Activated CD4-positive, alpha-beta memory T cell treated with anti-CD3 and anti-CD28 coated beads for 36 hours (primary cell): ENCODE measurements at regions of chr1 and their contacts with region 1.

Region 1: GRCh38 chr1:201511941-201512539 is 5.1 kb upstream of the CSRP1 start:
- DNase-seq: no peak
- H3K4me3 Mint-ChIP-seq: no peak overlapping the region
- H3K27ac Mint-ChIP-seq: no peak overlapping the region
- H3K4me1 Mint-ChIP-seq: peaks cover 9% of the 10 kb centered on the region
- H3K27me3 Mint-ChIP-seq: no peaks in the 10 kb centered on the region

Region 2: GRCh38 chr1:201447911-201448871 is 63.8 kb before region 1 on chr1:
- CTCF ChIA-PET with region 1: interaction called, 150 read pairs
- POLR2A ChIA-PET with region 1: interaction called, 3 read pairs
- intact Hi-C with region 1: loop called (anchors 1 kb)
- DNase-seq: peak; percentile 82
- H3K4me3 Mint-ChIP-seq: no peak overlapping the region
- H3K27ac Mint-ChIP-seq: no peak overlapping the region
- H3K4me1 Mint-ChIP-seq: peaks cover 2% of the 10 kb centered on the region
- H3K27me3 Mint-ChIP-seq: peaks cover 15% of the 10 kb centered on the region

Region 3: GRCh38 chr1:201468844-201469511 is 43.1 kb before region 1 on chr1 and contains the start of gene PHLDA3:
- CTCF ChIA-PET with region 1: interaction called, 12 read pairs
- POLR2A ChIA-PET with region 1: interaction called, 3 read pairs
- intact Hi-C with region 1: no loop called
- DNase-seq: peak; percentile 69
- H3K4me3 Mint-ChIP-seq: peak within 1 kb of the TSS; percentile 64
- H3K27ac Mint-ChIP-seq: no peak within 1 kb of the TSS
- H3K4me1 Mint-ChIP-seq: peaks cover 6% of the 10 kb centered on the region
- H3K27me3 Mint-ChIP-seq: peaks cover 36% of the 10 kb centered on the region
- total RNA-seq, gene PHLDA3: 3.4 to 4.1 TPM

Region 4: GRCh38 chr1:201488817-201489589 is 23.0 kb before region 1 on chr1:
- CTCF ChIA-PET with region 1: interaction called, 291 read pairs
- POLR2A ChIA-PET with region 1: no interaction called
- intact Hi-C with region 1: no loop called
- DNase-seq: no peak
- H3K4me3 Mint-ChIP-seq: no peak overlapping the region
- H3K27ac Mint-ChIP-seq: no peak overlapping the region
- H3K4me1 Mint-ChIP-seq: no peaks in the 10 kb centered on the region
- H3K27me3 Mint-ChIP-seq: no peaks in the 10 kb centered on the region

Region 5: DNA sequence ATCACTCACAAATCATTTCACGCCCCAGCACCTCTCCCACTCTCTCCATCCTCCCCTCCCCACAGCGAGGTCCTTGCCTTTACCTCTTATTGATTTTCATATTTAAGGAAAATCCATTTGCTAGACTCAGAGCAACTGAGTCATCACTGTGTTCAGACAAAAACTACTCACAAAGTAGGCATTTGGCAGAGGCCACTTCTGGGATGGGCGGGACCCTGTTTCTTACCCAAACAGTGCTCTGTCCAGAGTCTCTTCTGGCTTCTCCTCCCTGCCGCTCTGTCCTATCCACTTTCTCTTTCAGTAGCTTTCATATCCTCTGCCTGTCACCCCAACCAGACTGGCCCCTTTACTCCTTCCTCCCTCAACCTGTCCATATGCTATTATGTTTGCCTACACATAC is 24.5 kb after region 1 on chr1:
- CTCF ChIA-PET with region 1: interaction called, 23 read pairs
- POLR2A ChIA-PET with region 1: no interaction called
- intact Hi-C with region 1: no loop called
- DNase-seq: no peak
- H3K4me3 Mint-ChIP-seq: no peak overlapping the region
- H3K27ac Mint-ChIP-seq: no peak overlapping the region
- H3K4me1 Mint-ChIP-seq: peaks cover 16% of the 10 kb centered on the region
- H3K27me3 Mint-ChIP-seq: peaks cover 47% of the 10 kb centered on the region